Common myeloid progenitor, CD34-positive (primary cell): ENCODE measurements at regions of chr22 and their contacts with region 1.

Region 1: GRCh38 chr22:32612834-32613233 is 138.2 kb downstream of the FBXO7 start:
- DNase-seq: no peak
- H3K4me3 ChIP-seq: no peak overlapping the region
- H3K27ac ChIP-seq: no peak overlapping the region
- H3K4me1 ChIP-seq: no peaks in the 10 kb centered on the region
- H3K27me3 ChIP-seq: no peaks in the 10 kb centered on the region

Region 2: GRCh38 chr22:32623943-32624342 is 11.1 kb after region 1 on chr22:
- CTCF ChIA-PET with region 1: interaction called, 11 read pairs
- POLR2A ChIA-PET with region 1: no interaction called
- DNase-seq: no peak
- H3K4me3 ChIP-seq: no peak overlapping the region
- H3K27ac ChIP-seq: no peak overlapping the region
- H3K4me1 ChIP-seq: peaks cover 15 to 40% (median 29%) of the 10 kb centered on the region in 4 experiments
- H3K27me3 ChIP-seq: no peaks in the 10 kb centered on the region